Dendritic cell treated with granulocyte-macrophage colony-stimulating factor and Interleukin-4, amounts not matched to agents 40 ng/mL and 50 ng/mL, for 4 days (primary cell): ENCODE measurements at regions of chr13 and their contacts with region 1.

Region 1: GRCh38 chr13:99220199-99220935 is 19.7 kb downstream of the UBAC2 start:
- H3K4me3 Mint-ChIP-seq: no peak overlapping the region
- H3K27ac Mint-ChIP-seq: no peak overlapping the region
- H3K4me1 Mint-ChIP-seq: peaks cover 62% of the 10 kb centered on the region
- H3K27me3 Mint-ChIP-seq: no peaks in the 10 kb centered on the region

Region 2: DNA sequence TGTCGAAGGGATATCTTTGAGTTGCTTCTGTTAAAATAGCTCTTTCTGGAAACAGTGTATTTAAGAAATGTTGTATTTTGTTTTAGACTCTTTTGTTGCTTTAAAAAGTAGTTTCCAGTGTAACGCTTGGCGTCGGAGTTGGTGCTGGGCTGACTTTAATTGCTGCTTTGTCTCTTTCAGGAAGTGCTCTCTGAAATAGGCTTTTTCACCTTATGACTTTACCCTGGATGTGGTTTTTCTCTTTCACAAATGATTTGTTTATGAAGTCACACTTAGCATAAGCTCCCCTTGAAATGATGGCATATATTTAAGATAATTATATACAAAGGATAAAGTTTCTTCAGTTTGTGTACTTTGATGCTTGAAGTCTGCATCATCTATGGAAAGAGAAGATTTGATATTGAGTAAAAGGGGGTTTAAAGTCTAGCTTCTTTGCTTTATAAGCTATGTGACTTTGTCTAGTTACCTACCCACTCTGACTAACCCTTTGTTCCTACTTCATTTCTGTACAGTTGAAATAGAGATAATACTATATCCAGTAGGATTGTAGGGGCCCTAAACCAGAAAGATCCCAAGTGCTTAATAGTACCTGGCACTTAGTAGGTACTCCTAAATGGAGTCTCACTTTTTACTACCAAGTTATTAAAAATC is 38.0 kb after region 1 on chr13 and contains the start of gene GPR18:
- intact Hi-C with region 1: loop called (anchors 5 kb)
- H3K4me3 Mint-ChIP-seq: peak within 1 kb of the TSS; percentile 45
- H3K27ac Mint-ChIP-seq: peak within 1 kb of the TSS; percentile 60
- H3K4me1 Mint-ChIP-seq: peaks cover 43% of the 10 kb centered on the region
- H3K27me3 Mint-ChIP-seq: no peaks in the 10 kb centered on the region